ENCODE measurements at regions of chr17 and their contacts with region 1.

Region 1: DNA sequence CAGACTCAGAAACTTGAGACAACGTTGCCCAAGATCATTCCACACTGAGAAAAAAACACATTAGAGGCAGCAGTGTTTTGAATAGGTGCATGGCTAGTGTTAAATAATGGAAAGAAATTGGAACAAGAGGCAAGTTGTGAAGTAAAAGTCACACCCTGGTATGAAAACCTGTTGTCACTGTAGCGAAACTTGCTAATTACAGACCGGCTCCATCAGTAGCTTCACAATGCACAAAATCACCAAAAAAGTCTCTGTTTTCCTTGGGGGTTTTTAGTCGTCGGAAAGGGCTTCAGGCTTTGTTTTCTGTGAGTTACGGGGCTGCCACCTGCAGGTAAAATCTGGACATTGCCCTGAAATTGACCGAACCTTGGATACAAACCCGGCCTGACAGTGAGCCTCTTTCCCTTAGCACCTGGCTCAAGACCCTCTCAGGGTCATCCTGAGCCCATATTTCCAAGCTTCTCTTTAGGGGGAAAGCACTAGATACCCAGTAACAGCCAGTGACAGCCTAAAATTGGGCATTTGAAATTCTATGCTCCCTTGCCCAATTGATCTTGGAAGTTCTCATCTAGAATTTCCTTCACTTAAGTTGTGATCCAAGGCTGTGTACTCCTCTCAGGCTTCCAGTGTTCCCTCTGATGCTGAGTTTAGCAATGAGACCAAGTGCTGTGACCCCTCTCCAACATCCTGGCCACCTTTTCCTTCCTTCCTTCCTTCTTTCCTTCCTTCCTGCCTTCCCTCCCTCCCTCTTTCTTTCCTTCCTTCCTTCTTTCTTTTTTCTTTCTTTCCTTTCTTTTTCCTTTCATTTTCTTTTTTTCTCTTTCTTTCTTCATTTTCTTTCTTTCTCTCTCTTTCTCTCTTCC is 7.2 kb upstream of the GRB2 start:
- DNase-seq: peak in 1 of 2 donors; percentile 56
- ATAC-seq: peak; percentile 23 to 85
- H3K4me3 ChIP-seq: peak overlapping the region in 2 of 4 donors; percentile 17 to 21
- H3K27ac ChIP-seq: no peak overlapping the region
- H3K4me1 ChIP-seq: peaks cover 0 to 6% of the 10 kb centered on the region in 2 donors
- H3K27me3 ChIP-seq: no peaks in the 10 kb centered on the region
- CTCF ChIP-seq: peak; percentile 76 to 88 (median 79)
- POLR2A ChIP-seq: no peak

Region 2: GRCh38 chr17:75319904-75320691 is 92.6 kb before region 1 on chr17:
- in situ Hi-C with region 1: loop called in 3 of 4 experiments (anchors 5 to 10 kb)
- intact Hi-C with region 1: loop called (anchors 1 kb)
- DNase-seq: no peak
- ATAC-seq: no peak
- H3K4me3 ChIP-seq: no peak overlapping the region
- H3K27ac ChIP-seq: no peak overlapping the region
- H3K4me1 ChIP-seq: peaks cover 6 to 8% of the 10 kb centered on the region in 2 donors
- H3K27me3 ChIP-seq: no peaks in the 10 kb centered on the region
- CTCF ChIP-seq: no peak
- POLR2A ChIP-seq: no peak

Region 3: DNA sequence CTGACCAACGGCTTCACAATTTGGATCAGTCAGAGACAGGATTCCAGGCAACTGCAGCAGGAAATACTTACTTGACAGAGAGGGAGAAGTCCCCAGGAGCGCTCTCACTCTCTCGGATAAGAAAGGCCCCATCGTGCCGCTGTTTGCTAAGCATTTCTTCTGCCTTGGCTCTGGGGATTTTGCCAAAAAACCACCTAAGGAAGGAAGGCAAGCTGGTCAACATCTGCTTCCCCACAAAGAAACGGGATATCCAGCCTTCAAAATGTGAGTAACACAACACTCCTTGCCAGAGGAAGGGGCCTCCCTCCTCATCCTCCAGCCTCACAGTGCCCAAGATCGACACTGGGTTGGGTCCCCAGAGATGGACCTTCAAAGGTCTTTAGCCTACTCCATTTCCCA is 86.9 kb before region 1 on chr17:
- in situ Hi-C with region 1: loop called (anchors 5 to 10 kb)
- intact Hi-C with region 1: loop called (anchors 1 kb)
- DNase-seq: no peak
- ATAC-seq: no peak
- H3K4me3 ChIP-seq: no peak overlapping the region
- H3K27ac ChIP-seq: peak overlapping the region in 3 of 4 donors; percentile 15 to 26 (median 15)
- H3K4me1 ChIP-seq: peaks cover 8 to 12% of the 10 kb centered on the region in 2 donors
- H3K27me3 ChIP-seq: no peaks in the 10 kb centered on the region
- CTCF ChIP-seq: no peak
- POLR2A ChIP-seq: no peak

Region 4: DNA sequence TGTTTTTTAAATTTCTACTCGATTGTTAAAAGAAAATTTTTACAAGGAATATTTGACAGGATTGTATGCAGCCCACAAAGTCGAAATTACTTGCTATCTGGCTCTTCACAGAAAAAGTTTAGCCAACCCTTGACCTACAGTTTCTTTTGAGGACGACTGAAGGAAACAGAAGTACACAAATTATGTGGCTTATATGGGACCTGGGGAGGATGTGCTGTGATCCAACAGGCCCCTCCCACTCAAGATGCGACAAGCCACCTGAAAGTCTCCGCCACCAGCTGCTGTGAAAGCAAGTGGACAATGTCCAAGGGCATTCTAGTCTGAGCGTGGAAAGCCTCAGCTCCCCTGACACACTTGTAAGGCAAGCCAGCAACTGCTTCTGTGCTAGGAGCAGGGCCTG is 81.0 kb before region 1 on chr17:
- in situ Hi-C with region 1: loop called (anchors 5 to 10 kb)
- intact Hi-C with region 1: no loop called
- DNase-seq: no peak
- ATAC-seq: no peak
- H3K4me3 ChIP-seq: no peak overlapping the region
- H3K27ac ChIP-seq: no peak overlapping the region
- H3K4me1 ChIP-seq: peaks cover 0 to 3% of the 10 kb centered on the region in 2 donors
- H3K27me3 ChIP-seq: no peaks in the 10 kb centered on the region
- CTCF ChIP-seq: no peak
- POLR2A ChIP-seq: no peak

Region 5: GRCh38 chr17:75779231-75779986 is 366.7 kb after region 1 on chr17:
- in situ Hi-C with region 1: no loop called
- intact Hi-C with region 1: no loop called
- DNase-seq: peak; percentile 98 to 99
- ATAC-seq: peak; percentile 75 to 80
- H3K4me3 ChIP-seq: peak overlapping the region; percentile 83 to 96 (median 88)
- H3K27ac ChIP-seq: peak overlapping the region; percentile 91 to 98 (median 98)
- H3K4me1 ChIP-seq: peaks cover 54 to 55% of the 10 kb centered on the region in 2 donors
- H3K27me3 ChIP-seq: no peaks in the 10 kb centered on the region
- CTCF ChIP-seq: no peak
- POLR2A ChIP-seq: peak; percentile 100

Measured in gastrocnemius medialis (tissue), 4 donors.